ENCODE measurements at regions of chrX and their contacts with region 1.

Region 1: GRCh38 chrX:17521871-17522693 is 147.1 kb downstream of the NHS start:
- DNase-seq: no peak
- ATAC-seq: no peak
- H3K4me3 ChIP-seq: no peak overlapping the region
- H3K27ac ChIP-seq: no peak overlapping the region
- H3K4me1 ChIP-seq: no peaks in the 10 kb centered on the region
- H3K27me3 ChIP-seq: no peaks in the 10 kb centered on the region
- CTCF ChIP-seq: no peak

Region 2: GRCh38 chrX:17104433-17104832 is 417.6 kb before region 1 on chrX:
- CTCF ChIA-PET with region 1: no interaction called
- POLR2A ChIA-PET with region 1: interaction called, 15 read pairs
- in situ Hi-C with region 1: no loop called
- intact Hi-C with region 1: no loop called
- DNase-seq: no peak
- ATAC-seq: no peak
- H3K4me3 ChIP-seq: no peak overlapping the region
- H3K27ac ChIP-seq: no peak overlapping the region
- H3K4me1 ChIP-seq: no peaks in the 10 kb centered on the region
- H3K27me3 ChIP-seq: no peaks in the 10 kb centered on the region
- CTCF ChIP-seq: no peak

Region 3: DNA sequence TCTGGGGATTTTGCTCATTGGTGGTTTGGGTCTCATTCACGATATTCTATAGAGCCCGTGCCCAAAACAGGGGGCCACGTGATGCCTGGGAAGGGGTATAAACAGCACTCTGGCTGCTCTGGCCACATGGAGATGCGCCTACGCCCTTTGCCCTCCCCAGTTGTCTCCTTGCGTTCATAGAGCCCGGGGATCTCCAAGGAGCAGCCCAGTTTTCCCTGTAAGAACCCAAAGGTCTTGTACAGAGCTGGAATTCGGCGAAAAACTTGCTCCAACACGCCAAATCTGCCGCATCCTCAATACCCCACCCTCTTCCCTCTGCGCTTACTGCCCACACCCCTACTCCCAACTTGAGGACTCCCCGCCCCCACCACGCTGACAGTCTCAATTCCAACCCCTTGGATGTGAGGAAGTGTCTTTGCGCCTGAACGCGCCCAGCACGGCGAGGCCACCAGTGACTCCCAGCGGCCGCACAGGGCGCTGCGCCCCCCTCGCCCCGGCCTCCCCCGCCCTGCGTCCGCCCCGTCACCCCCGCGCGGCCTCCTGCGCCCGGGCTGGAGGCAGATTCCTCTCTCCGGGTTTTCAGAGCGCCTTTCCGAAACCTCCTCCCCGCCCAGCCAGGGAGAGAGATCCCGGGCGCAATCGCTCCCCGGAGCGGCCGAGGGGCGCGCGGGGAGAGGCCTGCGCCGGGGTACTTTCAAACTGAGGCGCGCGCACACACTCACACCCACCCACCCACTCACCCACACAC is 147.3 kb before region 1 on chrX and contains the start of gene NHS:
- CTCF ChIA-PET with region 1: no interaction called
- POLR2A ChIA-PET with region 1: no interaction called
- in situ Hi-C with region 1: no loop called
- intact Hi-C with region 1: no loop called
- DNase-seq: no peak
- ATAC-seq: peak; percentile 69
- H3K4me3 ChIP-seq: peak within 1 kb of the TSS; percentile 34 to 52
- H3K27ac ChIP-seq: no peak within 1 kb of the TSS
- H3K4me1 ChIP-seq: no peaks in the 10 kb centered on the region
- H3K27me3 ChIP-seq: no peaks in the 10 kb centered on the region
- CTCF ChIP-seq: peak; percentile 69
- total RNA-seq, gene NHS: 0.80 TPM

Region 4: DNA sequence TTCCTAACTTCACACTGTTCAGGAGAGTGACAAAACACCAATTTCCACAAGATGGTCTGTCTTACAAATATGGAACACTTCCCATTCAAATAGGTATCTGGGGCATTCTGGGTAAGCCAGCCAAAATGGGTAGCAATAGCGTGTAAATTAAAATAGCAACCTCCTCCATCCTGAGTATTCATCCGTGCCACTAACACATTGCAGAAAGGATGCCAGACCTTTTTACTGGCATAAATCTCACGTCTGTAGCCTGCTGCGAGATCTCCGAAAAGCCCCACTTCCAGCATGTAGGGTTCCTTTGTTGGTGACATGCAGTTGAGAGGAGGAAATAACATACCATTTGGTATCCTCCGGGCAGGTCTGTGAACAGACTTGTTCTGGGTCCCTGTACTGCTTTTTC is 391.7 kb after region 1 on chrX:
- CTCF ChIA-PET with region 1: no interaction called
- POLR2A ChIA-PET with region 1: no interaction called
- in situ Hi-C with region 1: no loop called
- intact Hi-C with region 1: no loop called
- DNase-seq: no peak
- ATAC-seq: no peak
- H3K4me3 ChIP-seq: no peak overlapping the region
- H3K27ac ChIP-seq: no peak overlapping the region
- H3K4me1 ChIP-seq: no peaks in the 10 kb centered on the region
- H3K27me3 ChIP-seq: no peaks in the 10 kb centered on the region
- CTCF ChIP-seq: no peak